Right ventricle myocardium superior (tissue), 1 donor: ENCODE measurements at regions of chr3 and their contacts with region 1.

Region 1: DNA sequence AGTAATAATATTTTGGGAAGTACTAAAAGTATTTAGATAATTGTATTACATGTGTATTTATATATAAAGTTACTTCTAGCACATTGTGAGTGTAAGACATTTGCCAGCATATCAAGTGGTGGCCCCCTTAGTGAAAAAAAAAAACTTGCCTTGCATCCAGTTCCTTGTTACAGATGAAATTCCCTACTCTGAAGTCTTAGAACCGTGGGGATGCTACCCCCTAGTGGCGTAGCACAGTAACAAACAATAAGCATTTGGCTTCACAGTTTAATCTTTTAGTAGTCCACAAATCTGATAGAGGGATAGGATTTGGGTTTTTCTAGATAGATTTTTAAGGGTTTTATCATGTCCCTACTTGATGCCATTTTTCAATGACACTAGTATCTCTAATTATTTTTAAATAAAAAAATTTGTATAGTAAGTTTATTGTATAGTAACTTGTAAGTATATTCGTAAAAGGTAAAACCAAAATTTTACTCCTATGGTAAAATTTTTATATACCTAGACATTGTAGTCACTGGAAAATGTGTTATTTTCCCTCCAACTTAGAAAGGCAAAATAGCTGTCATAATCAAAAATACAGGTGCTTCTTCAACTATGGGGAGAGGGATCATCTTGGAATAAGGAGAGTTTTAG is 14.3 kb downstream of the SMC4 start:
- DNase-seq: no peak
- ATAC-seq: peak; percentile 77

Region 2: GRCh38 chr3:160027541-160028195 is 386.1 kb before region 1 on chr3:
- intact Hi-C with region 1: loop called (anchors 5 kb)
- DNase-seq: no peak
- ATAC-seq: no peak

Region 3: DNA sequence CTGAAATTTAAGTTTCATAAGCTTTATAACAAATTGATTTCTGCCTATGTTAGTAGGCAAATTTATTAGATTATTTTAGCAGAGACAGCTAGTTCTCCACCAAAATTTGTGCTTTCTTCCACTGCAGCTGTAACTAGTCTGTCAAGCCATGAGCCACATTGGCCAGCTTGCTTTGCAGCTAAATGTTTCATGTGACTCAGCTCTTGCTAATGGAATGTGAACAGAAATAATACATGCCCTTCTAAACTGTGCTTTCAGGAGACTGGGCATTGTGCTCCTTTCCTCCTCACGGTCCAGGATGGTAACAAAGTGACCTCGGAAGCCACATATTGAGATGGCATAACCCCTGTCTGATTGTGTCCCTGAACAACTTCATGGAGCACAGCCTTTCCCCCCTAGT is 203.0 kb after region 1 on chr3:
- intact Hi-C with region 1: no loop called
- DNase-seq: no peak
- ATAC-seq: peak; percentile 79